ENCODE measurements at regions of chr12 and their contacts with region 1.

Region 1: DNA sequence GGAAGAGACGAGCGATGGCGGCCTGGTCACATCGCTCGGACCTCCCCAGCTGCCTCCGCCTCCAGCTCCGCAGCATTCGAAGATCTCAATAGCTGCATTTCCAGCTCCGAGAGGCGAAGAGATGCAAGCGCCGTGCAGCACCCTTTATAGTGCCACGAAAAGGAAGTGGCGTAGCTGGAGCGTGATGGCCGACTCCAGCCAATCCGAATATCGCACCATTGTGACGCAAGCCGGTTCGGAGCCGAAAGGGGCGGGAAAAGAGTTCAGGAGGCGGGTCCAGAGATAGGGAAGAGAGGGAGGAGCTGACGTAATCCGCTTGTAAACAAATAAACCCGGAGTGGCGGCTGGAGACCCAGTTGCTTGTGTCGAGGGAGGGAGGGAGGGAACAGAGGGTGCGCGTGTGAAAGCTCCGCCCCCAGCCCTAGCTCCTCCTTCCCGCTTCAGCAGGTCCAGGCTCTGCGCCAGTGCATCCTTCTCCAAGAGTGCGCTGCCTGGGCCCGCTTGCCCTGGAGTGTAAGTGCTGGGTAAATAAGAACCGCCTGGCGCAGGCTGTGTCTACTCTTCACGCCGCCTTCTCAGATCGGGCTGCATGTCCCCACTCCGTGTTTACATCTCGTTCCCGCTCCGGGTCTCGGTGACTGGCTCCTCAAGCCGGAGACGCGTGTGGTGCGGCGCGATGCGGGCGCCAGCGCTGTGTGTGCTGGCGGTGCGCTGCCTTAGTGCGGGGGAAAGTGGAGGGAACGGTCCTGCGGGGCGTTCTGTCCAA is at the start of gene BTG1:
- DNase-seq: peak; percentile 98 to 100
- H3K4me3 ChIP-seq: peak within 1 kb of the TSS; percentile 94 to 97
- H3K27ac ChIP-seq: peak within 1 kb of the TSS; percentile 97 to 100
- H3K4me1 ChIP-seq: peaks cover 0 to 18% (median 0%) of the 10 kb centered on the region in 4 donors
- H3K27me3 ChIP-seq: no peaks in the 10 kb centered on the region
- CTCF ChIP-seq: peak in 1 of 2 experiments; percentile 18

Region 2: GRCh38 chr12:91603060-91603459 is 542.9 kb before region 1 on chr12:
- intact Hi-C with region 1: loop called (anchors 10 kb)
- DNase-seq: no peak
- H3K4me3 ChIP-seq: no peak overlapping the region
- H3K27ac ChIP-seq: peak overlapping the region; percentile 11 to 47
- H3K4me1 ChIP-seq: peaks cover 0 to 17% (median 2%) of the 10 kb centered on the region in 4 donors
- H3K27me3 ChIP-seq: no peaks in the 10 kb centered on the region
- CTCF ChIP-seq: no peak

Region 3: DNA sequence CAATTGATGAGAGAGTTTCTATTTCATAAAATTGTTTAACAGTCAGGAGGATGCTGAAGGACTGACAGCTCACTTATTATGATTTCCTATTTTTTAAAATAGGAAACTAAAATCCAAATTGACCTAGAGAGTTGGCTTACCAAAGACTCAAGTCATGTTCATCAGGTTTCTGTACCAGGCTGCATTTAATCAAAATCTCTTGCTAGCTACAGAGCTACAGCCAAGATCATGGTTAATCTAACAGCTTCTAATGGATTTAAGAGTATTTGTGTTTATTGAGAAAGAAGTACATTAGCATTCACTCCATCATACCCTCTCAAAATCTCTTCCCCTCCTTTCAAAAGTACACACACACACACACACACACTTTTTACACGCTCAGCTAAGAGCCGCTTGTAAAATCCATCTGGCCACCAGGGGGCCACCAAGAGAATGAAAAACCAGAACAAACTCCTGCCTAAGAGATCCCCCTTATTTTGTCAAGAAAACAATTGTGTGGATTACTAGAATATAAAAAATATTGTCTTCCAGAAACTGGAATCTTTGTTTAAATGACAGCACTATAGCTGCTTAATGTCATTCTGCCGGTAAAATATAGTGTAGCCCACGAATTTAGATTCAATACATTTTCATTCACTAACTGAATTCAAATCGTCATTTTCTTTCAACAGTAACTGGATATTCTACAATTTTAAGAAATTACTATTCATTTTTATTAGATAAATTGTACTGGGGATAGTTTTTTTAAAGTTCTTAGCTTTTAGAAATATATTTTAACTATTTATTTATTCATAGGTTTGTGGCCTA is 334.2 kb before region 1 on chr12:
- intact Hi-C with region 1: loop called (anchors 10 kb)
- DNase-seq: peak; percentile 80 to 83
- H3K4me3 ChIP-seq: no peak overlapping the region
- H3K27ac ChIP-seq: no peak overlapping the region
- H3K4me1 ChIP-seq: no peaks in the 10 kb centered on the region
- H3K27me3 ChIP-seq: no peaks in the 10 kb centered on the region
- CTCF ChIP-seq: peak; percentile 79 to 81

Region 4: DNA sequence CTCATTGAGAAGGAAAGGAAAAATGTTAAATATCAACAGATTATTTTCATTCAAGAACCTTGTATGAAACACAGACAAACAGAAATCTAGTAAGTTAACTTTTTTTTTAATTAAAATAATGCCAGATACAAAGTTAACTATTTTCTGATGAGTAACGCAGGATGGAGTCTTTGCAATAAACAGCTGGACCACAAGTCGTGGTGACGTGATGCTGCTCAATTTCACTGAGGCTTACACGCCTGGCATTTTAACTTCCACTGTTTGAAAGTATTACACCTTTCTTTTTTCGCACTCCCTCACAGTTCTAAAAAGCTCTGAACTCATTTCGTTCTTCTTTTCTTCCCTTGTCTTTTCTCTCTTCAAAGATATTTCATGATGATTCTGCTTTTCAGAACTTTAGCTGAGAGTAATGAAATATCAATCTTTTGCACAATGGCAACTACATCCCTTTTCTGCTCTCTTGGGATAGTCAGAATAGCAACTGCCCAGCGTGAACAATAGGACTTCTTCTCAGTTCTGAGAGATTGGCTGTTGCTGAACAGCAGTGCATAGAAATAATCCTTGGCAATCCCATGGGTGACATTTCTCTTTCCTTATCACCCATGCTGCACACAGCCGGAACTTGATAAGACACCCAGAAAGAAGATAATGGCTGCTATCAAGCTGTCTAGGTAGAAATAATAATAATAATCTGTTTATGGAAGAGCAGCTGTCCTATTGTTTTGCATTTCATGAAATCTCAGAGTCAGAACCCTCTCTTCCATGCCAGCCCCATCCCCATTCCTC is 160.7 kb before region 1 on chr12:
- intact Hi-C with region 1: no loop called
- DNase-seq: no peak
- H3K4me3 ChIP-seq: no peak overlapping the region
- H3K27ac ChIP-seq: peak overlapping the region in 1 of 2 donors; percentile 26
- H3K4me1 ChIP-seq: peaks cover 12 to 72% (median 31%) of the 10 kb centered on the region in 4 donors
- H3K27me3 ChIP-seq: no peaks in the 10 kb centered on the region
- CTCF ChIP-seq: no peak

Region 5: GRCh38 chr12:92244036-92244435 is 98.1 kb after region 1 on chr12:
- intact Hi-C with region 1: loop called (anchors 5 kb)
- DNase-seq: peak in 1 of 2 donors; percentile 40
- H3K4me3 ChIP-seq: peak overlapping the region in 1 of 2 donors; percentile 10
- H3K27ac ChIP-seq: peak overlapping the region; percentile 32 to 60
- H3K4me1 ChIP-seq: peaks cover 0 to 13% (median 10%) of the 10 kb centered on the region in 4 donors
- H3K27me3 ChIP-seq: no peaks in the 10 kb centered on the region
- CTCF ChIP-seq: peak; percentile 28 to 29

Region 6: GRCh38 chr12:92505254-92506231 is 359.6 kb after region 1 on chr12:
- intact Hi-C with region 1: loop called (anchors 5 kb)
- DNase-seq: peak; percentile 32 to 82
- H3K4me3 ChIP-seq: peak overlapping the region; percentile 12 to 34
- H3K27ac ChIP-seq: peak overlapping the region; percentile 82 to 86
- H3K4me1 ChIP-seq: peaks cover 0 to 49% (median 38%) of the 10 kb centered on the region in 4 donors
- H3K27me3 ChIP-seq: no peaks in the 10 kb centered on the region
- CTCF ChIP-seq: no peak

Region 7: DNA sequence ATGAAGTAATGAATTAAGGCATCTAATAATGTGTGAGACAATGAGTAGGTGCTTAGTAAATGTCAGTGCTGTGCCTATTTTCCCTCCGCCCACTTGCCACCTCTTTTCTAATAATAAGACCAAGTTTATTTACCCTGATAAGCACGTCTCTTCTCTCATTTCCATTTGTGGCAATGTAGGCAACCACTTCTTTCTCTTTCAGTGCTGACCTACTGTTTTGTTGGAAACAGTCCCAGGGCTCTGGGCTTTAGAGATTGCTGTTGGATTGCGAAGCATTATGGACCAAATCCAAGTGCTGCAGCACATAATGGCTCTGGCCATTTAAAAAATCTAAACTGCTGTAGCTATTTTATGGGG is 415.6 kb after region 1 on chr12:
- intact Hi-C with region 1: loop called (anchors 5 kb)
- DNase-seq: peak; percentile 66 to 75
- H3K4me3 ChIP-seq: no peak overlapping the region
- H3K27ac ChIP-seq: peak overlapping the region; percentile 71 to 76
- H3K4me1 ChIP-seq: peaks cover 0 to 52% (median 24%) of the 10 kb centered on the region in 4 donors
- H3K27me3 ChIP-seq: no peaks in the 10 kb centered on the region
- CTCF ChIP-seq: no peak

Measured in tibial artery (tissue), 4 donors.